Heart left ventricle (tissue), 16 donors: ENCODE measurements at regions of chr1 and their contacts with region 1.

Region 1: DNA sequence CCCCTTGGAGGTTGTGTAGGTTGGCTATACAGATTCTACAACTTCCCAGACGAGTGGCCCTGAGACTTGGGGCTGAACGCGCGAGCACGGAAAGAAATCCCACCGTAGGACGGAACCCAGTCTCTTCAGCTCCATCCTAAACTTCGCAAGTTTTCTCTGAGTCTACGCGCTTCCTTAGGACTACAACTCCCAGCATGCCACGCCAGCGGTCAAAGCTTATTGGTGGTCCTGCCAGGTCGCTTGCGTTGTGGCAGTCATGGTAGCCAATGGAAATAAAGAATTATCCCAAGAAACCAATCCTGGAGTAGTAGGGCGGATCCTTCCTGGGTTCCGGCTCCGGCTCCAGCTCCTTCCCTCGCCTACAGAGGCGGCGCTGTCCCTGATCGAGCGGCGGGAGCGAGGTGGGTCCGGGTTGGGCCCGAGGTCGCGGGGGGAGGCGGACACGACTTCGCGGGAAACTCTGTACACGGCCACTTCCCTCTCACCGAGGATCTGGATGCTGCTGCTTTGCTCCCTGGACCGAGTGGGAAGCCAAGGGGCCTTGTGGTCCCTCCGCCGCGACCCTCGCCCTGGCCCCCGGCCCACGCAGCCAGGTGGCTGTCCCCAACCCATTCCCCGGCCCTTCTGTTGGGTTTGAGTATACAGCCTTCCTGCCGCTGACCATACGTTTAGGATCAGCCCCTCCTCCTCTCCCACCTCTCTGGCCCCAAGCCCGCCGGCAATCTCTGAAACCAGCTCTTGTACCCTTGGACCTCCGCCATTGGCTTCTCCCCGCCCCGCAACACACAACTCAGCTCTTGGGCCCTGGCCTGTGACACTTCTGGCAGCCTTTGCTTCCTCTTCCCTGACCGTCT is at the start of gene ZNF691:
- DNase-seq: peak; percentile 93 to 97 (median 96)
- ATAC-seq: peak; percentile 98 to 99 (median 98)
- H3K4me3 ChIP-seq: peak within 1 kb of the TSS; percentile 69 to 99 (median 90)
- H3K27ac ChIP-seq: peak within 1 kb of the TSS; percentile 85 to 96 (median 89)
- H3K4me1 ChIP-seq: peaks cover 0 to 28% (median 16%) of the 10 kb centered on the region in 12 donors
- H3K27me3 ChIP-seq: no peaks in the 10 kb centered on the region
- CTCF ChIP-seq: peak; percentile 25 to 77 (median 43)
- POLR2A ChIP-seq: peak in 1 of 2 donors; percentile 75
- total RNA-seq, gene ZNF691: 4.9 to 11.6 (median 8.4) TPM

Region 2: DNA sequence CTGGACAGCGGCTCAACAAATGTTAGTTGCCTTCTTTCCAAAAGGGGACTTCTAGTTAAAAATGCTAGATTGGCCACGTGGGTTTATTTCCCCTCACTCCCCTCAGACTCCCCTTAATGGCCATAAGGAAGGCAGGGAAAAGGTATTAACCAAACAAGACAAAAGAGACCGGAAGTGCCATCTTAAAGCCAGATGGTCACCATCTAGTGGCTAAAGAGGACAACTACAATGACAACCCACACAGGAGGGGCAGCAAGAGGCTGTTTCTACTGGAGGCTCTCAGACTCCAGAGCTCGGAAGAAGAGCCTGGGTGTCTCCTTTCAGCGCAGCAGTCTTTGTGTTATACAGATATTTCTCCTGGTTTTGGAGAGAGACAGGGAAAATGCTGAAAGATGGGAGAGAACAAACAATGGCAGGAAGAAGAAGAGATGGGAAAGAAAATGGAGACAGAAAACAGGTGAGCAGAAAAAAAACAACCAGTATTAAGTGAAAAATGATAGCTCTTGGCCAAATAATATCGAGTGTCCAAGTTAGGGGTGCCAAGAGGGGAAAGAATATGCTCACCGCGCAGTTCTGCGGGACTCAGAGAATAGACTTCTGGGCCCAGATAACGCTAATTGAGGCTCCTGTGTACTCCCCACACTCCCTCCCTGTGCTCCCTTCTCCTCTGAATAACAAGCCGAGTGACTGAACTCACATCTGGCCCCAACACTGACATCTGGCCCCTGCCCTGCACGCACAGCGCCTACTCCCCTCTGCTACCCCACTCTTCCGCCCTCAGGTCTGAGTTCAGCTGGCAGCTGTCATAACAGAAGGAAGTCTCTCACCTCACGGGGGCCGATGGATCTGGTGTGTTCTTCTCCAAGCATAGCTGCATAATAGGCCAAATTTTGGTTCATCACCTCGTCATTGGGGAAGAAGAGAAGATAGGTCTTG is 89.3 kb before region 1 on chr1:
- intact Hi-C with region 1: no loop called
- DNase-seq: no peak
- ATAC-seq: peak in 3 of 4 donors; percentile 59 to 63 (median 60)
- H3K4me3 ChIP-seq: no peak overlapping the region
- H3K27ac ChIP-seq: no peak overlapping the region
- H3K4me1 ChIP-seq: peaks cover 0 to 4% (median 0%) of the 10 kb centered on the region in 12 donors
- H3K27me3 ChIP-seq: no peaks in the 10 kb centered on the region
- CTCF ChIP-seq: peak; percentile 52 to 73 (median 57)
- POLR2A ChIP-seq: no peak

Region 3: GRCh38 chr1:42806171-42806570 is 40.3 kb before region 1 on chr1:
- intact Hi-C with region 1: no loop called
- DNase-seq: no peak
- ATAC-seq: no peak
- H3K4me3 ChIP-seq: no peak overlapping the region
- H3K27ac ChIP-seq: no peak overlapping the region
- H3K4me1 ChIP-seq: peaks cover 0 to 8% (median 0%) of the 10 kb centered on the region in 12 donors
- H3K27me3 ChIP-seq: no peaks in the 10 kb centered on the region
- CTCF ChIP-seq: no peak
- POLR2A ChIP-seq: no peak

Region 4: GRCh38 chr1:42816585-42817434 is 29.7 kb before region 1 on chr1 and contains the starts of genes ERMAP and SVBP:
- intact Hi-C with region 1: loop called in 2 of 10 experiments (anchors 1 to 2 kb)
- DNase-seq: peak; percentile 93 to 98 (median 94)
- ATAC-seq: peak; percentile 90 to 99 (median 98)
- H3K4me3 ChIP-seq: peak within 1 kb of the TSS; percentile 44 to 92 (median 78)
- H3K27ac ChIP-seq: peak within 1 kb of the TSS; percentile 93 to 100 (median 98)
- H3K4me1 ChIP-seq: peaks cover 0 to 27% (median 17%) of the 10 kb centered on the region in 12 donors
- H3K27me3 ChIP-seq: no peaks in the 10 kb centered on the region
- CTCF ChIP-seq: peak in 2 of 12 donors; percentile 16 to 17
- POLR2A ChIP-seq: peak in 1 of 2 donors; percentile 49
- total RNA-seq, gene ERMAP: 2.2 to 8.2 (median 5.4) TPM
- total RNA-seq, gene SVBP: 11.5 to 22.8 (median 15.8) TPM